ENCODE measurements at regions of chr2 and their contacts with region 1.

Region 1: DNA sequence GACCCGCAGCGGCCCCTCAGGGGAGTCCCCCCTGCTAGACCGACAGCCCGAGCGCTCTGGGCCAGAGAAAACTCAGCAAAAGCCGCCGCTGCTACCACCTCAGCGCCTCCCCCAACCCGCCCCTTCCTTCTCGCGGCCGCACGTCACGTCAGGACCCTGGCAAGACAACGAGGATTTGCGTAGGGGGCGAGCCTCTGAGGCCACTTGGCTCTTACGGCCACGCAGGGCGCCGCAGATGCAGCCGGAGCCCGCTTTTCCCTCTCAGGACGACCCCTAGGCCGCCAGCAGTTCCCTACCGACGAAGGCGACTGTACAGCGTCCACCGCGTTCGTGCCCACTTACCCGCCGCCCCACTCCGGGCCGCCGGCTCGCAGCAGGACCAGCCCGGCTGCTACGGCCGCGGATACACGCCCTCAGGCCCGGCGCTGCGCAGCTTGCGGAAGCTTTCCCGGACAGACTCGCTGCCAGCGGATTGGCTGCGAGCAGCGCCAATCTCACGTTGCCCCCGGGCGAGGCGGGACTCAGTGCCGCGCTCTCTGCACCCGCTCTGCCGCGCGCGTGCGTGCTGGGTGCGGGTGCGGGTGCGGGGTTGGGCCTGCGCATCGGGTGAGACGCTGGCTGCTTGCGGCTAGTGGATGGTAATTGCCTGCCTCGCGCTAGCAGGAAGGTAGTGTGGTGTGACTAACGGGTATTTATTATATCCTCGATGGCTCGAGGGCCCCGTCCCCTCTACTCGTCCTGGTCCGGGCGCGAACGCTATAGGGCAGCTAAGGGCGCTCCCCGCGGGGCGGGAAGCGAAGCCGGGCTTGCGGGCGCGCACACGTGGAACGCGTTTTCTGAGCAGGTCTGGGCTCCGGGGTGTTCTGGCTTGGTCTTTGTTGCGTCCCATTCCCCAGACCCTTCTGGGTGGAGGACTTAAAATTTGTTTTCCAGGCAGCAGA is at the starts of genes ORMDL1 and PMS1:
- DNase-seq: peak; percentile 93 to 95
- H3K4me3 ChIP-seq: peak within 1 kb of the TSS; percentile 66 to 81
- H3K27ac ChIP-seq: peak within 1 kb of the TSS; percentile 93 to 96
- H3K4me1 ChIP-seq: peaks cover 0 to 13% of the 10 kb centered on the region in 2 donors
- H3K27me3 ChIP-seq: no peaks in the 10 kb centered on the region
- CTCF ChIP-seq: peak in 1 of 4 experiments; percentile 7
- POLR2A ChIP-seq: peak; percentile 75 to 90
- total RNA-seq, gene ORMDL1: 29.7 to 92.8 (median 66.9) TPM
- total RNA-seq, gene PMS1: 25.0 to 149 (median 58.5) TPM

Region 2: GRCh38 chr2:190180313-190181122 is 396.3 kb after region 1 on chr2:
- intact Hi-C with region 1: loop called (anchors 5 kb)
- DNase-seq: peak; percentile 35 to 36
- H3K4me3 ChIP-seq: peak overlapping the region; percentile 37 to 60
- H3K27ac ChIP-seq: peak overlapping the region; percentile 79 to 91
- H3K4me1 ChIP-seq: no peaks in the 10 kb centered on the region
- H3K27me3 ChIP-seq: no peaks in the 10 kb centered on the region
- CTCF ChIP-seq: peak in 3 of 4 experiments; percentile 31 to 53 (median 45)
- POLR2A ChIP-seq: peak in 1 of 2 donors; percentile 33